ENCODE measurements at regions of chr1 and their contacts with region 1.

Region 1: GRCh38 chr1:116485071-116485735 is 85.6 kb downstream of the CD58 start:
- DNase-seq: peak; percentile 90

Region 2: DNA sequence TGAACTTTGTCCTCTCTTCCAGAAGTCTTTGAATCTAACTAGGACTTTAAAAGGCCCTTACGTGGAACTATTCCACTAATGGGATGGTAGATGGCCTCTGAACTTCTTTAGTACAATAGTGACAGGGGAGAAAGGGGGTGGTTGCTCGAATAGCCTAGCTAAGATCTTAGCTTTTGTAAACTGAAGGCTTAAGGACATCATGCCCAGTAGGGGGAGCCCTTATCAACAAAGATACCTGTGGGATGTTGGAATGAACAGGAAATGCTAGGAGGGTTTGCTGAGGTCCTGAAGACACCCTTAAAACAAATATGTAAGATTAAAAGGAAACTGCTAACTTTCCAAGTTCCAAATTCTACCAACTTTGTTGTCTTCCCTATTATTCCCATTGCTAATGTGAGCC is 677.5 kb before region 1 on chr1:
- intact Hi-C with region 1: loop called (anchors 10 kb)
- DNase-seq: no peak

Region 3: DNA sequence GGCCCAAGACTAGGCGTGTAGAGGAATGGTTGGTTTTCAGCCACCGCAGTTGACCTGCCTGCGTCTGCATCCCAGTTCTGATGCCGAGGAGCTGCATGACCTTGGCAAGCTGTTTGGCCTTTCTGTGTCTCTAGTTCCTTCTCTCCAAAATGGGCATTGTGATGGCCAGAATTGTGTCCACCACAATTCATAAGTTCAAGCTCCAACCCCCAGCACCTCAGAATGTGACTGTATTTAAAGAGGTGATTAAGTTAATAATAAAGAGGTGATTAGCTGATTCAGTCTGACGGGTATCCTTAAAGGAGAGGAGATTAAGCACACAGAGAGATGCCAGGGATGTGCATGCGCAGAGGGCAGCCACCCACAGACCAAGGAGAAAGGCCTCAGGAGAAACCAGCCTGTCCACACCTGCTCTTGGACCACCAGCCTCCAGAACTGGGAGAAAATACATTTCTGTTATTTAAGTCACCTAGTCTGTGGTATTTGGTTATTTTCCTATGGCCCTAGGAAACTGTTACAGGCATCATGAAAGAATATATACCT is 345.5 kb before region 1 on chr1:
- intact Hi-C with region 1: loop called (anchors 1 kb)
- DNase-seq: no peak

Region 4: DNA sequence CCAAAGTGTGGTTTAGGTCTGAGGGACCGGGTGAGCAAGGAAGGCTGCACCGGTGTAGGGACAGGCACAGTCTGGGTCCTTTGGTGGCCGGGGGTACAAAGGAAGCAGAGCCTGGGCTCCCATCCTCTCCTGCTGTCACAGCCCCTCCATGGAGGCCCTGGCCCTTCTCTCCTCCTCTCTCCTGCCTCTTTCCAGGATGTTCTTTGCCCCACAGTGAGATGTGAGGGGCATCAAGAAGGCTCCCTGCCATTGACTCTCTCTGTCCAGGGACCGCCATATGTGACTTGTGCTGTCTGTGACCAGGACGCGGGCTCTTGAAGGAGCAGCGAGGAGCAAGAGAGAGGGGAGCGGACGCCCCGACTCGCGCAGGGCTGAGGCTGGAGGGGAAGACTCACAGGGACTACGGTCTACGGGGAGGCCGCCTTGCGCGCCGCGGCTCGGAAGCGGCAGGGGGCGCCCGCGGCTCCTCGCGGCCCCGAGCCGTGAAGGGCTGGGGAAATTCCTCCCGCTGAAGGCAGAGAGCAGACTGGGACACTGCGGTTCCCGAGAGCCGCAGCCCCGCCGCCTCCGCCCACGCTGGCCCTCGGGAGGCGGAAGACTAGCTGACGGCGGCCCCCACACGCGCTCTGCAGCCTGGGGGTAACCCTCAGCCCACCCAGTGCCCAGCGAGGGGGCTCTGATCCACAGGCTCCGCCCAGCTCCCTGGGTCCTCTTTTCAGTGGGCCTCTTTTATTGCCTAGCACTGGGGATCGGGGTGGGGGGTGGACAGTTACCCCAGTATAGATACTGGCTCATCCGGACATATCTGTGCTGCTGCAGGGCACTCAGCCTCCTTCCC is 333.2 kb before region 1 on chr1:
- intact Hi-C with region 1: loop called (anchors 5 kb)
- DNase-seq: peak; percentile 89

Region 5: DNA sequence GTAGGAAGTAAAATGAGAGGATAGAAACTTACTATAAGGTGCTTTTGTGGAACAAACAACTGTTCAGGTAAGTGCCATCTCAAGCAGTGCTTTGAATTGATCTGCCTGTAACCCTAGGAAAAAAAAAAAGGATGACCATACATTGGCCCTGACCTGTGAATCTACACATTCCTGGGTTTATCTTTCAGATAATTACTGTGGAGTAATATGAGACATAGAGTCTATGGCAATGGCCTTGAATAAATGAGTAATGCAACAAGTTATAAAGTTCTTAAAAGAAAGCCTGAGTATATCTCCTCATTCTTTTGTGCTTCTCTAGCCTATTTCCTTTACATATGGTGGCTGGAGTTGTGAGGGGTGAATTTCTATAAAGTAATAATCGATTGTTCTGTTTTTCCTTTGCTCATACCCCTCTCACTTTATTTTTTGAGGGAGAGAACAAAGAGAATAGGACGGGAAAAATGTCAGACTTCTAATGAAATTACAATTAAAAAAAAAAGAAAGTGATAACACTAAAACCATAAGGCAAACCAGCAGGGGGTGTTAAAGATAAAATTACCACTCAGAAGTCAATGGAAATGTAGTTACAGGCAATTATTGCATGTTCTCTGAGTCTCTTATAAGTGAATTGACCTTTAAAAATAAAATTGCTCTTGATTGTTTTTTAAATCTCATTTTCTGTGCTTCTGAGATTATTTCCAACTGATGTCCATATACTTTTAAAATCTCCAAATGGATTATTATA is 124.6 kb before region 1 on chr1:
- intact Hi-C with region 1: loop called (anchors 2 kb)
- DNase-seq: no peak

Region 6: GRCh38 chr1:116372587-116373444 is 112.4 kb before region 1 on chr1 and contains the start of gene ATP1A1:
- intact Hi-C with region 1: no loop called
- DNase-seq: peak; percentile 100
- total RNA-seq, gene ATP1A1: 192 TPM

Region 7: GRCh38 chr1:116411784-116412479 is 73.3 kb before region 1 on chr1:
- intact Hi-C with region 1: loop called (anchors 2 kb)
- DNase-seq: no peak

Region 8: DNA sequence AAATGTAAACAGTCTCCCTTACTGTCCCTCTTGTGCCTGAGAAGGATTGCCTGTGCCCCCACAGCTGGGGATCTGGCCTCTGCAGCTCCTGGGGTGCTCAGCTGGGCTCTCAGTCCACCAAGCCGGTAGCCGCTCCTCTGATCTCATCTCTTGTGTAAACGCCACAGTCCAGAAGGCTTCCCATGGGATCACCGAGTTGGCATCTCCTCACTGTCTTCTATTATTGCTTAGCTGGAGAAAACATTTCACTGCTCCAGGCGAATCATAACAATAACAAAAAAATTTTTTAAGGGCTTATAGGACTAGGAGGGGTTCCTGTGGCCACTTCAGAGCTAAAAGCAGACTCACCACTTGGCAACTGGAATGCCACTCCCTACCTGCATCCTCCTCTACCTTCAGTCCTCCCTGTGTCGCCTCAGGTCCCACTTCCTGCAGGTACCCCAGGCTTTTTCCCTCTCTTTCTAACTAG is 36.4 kb before region 1 on chr1:
- intact Hi-C with region 1: no loop called
- DNase-seq: no peak

Measured in cardiac septum (tissue), 1 donor.